ENCODE measurements at regions of chr7 and their contacts with region 1.

Region 1: DNA sequence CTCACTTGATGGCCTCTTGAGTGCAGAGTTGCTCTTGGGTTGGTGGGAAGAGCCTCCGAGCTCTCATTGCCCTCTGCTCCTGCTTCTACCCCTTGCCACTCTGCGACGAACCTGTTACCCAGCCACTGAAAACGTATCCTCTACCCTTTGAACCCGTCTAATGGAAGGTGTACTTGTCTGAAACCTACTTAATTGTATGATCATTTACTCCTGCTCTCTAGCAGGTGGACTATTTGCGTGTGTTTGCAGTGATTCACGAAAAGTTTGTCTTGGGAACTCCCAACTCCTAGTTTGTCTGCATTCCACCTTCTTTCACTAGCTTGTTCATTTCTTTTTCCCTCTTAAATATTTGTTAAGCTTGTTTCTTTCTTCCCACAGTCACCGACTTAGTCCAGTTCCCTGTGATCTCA is 503 bp downstream of the CROT start:
- DNase-seq: no peak
- H3K4me3 ChIP-seq: peak overlapping the region; percentile 58 to 84 (median 75)
- H3K27ac ChIP-seq: peak overlapping the region; percentile 84 to 94
- H3K4me1 ChIP-seq: no peaks in the 10 kb centered on the region
- H3K27me3 ChIP-seq: no peaks in the 10 kb centered on the region
- CTCF ChIP-seq: no peak
- POLR2A ChIP-seq: no peak

Region 2: GRCh38 chr7:87361320-87361719 is 15.4 kb after region 1 on chr7:
- intact Hi-C with region 1: loop called (anchors 2 kb)
- DNase-seq: no peak
- H3K4me3 ChIP-seq: no peak overlapping the region
- H3K27ac ChIP-seq: no peak overlapping the region
- H3K4me1 ChIP-seq: no peaks in the 10 kb centered on the region
- H3K27me3 ChIP-seq: no peaks in the 10 kb centered on the region
- CTCF ChIP-seq: no peak
- POLR2A ChIP-seq: no peak

Region 3: DNA sequence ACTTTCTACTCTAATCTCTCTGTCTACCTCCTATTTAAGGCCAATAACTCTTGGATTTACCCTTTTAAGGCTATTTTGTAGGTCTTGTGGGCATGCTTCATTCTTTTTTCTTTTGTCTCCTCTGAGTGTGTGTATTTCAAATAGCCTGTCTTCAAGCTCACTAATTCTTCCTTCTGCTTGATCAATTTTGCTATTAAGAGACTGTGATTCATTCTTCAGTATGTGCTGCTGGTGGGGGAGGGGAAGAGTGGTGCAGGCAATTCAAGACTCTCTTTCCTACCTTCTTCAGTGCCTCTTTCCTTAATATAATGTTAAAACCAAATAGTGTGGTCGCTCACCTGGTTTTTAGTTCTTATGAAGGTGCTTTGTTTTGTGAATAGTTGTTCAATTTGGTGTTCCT is 234.7 kb after region 1 on chr7:
- intact Hi-C with region 1: no loop called
- DNase-seq: no peak
- H3K4me3 ChIP-seq: no peak overlapping the region
- H3K27ac ChIP-seq: no peak overlapping the region
- H3K4me1 ChIP-seq: no peaks in the 10 kb centered on the region
- H3K27me3 ChIP-seq: no peaks in the 10 kb centered on the region
- CTCF ChIP-seq: no peak
- POLR2A ChIP-seq: no peak

Measured in breast epithelium (tissue), 4 donors.